ENCODE measurements at regions of chr6 and their contacts with region 1.

Region 1: DNA sequence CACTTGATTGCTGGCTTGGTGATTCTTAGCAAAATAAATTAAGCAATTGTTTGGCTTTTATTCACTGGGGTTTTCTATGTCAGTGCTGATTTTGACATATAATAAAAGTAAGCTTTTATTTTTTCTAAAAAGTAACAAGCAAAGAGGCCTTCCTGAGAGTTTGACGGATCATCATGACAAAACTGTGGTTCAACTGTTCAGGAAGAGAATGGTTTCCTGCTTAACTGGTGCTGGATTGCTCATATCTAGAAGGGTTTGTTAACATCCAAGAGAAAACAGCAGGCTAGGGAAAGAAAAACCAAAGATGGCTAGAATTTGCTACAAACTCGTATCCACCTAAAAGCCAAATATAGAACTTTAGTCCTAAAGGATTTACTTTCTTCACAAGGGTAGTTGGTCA is 21.2 kb downstream of the SERPINB1 start:
- DNase-seq: no peak
- ATAC-seq: no peak
- H3K4me3 Mint-ChIP-seq: no peak overlapping the region
- H3K27ac Mint-ChIP-seq: peak overlapping the region; percentile 53
- H3K4me1 Mint-ChIP-seq: peaks cover 40% of the 10 kb centered on the region
- H3K27me3 Mint-ChIP-seq: no peaks in the 10 kb centered on the region

Region 2: DNA sequence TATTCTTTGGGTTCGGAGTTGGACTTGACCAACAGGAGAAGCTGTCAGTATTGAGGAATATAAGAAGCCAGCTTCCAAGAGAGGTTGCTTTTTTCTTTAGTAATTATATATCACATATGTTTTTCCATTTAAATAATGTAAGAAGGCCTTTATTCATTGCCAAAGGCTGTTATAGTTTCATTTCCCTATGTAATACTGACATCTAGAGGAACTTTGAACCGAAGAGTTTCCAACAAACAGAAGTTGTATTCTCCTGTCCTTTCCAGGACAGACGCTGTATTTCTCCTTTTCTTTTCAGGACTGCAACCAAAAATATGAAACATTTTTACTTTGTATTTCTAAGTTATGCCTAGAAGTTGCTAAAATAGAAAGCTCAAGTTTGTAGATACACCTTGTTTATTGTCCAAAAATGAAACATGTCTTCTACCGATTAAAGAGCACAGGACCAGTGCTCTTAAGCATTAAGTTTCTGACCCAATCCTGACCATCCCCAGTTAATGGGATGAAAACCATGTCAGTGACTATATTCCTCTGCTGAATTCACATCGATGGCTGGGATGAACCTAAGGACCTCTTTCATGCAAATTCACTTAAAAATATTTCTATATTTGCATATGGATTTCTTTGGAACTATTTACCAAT is 124.8 kb before region 1 on chr6:
- CTCF ChIA-PET with region 1: no interaction called
- POLR2A ChIA-PET with region 1: no interaction called
- intact Hi-C with region 1: no loop called
- DNase-seq: no peak
- ATAC-seq: no peak
- H3K4me3 Mint-ChIP-seq: no peak overlapping the region
- H3K27ac Mint-ChIP-seq: no peak overlapping the region
- H3K4me1 Mint-ChIP-seq: no peaks in the 10 kb centered on the region
- H3K27me3 Mint-ChIP-seq: no peaks in the 10 kb centered on the region

Region 3: GRCh38 chr6:2799936-2800527 is 20.4 kb before region 1 on chr6:
- CTCF ChIA-PET with region 1: interaction called, 3 read pairs
- POLR2A ChIA-PET with region 1: interaction called, 3 read pairs
- intact Hi-C with region 1: loop called in 1 of 2 experiments (anchors 2 kb)
- DNase-seq: peak; percentile 33
- ATAC-seq: peak; percentile 80
- H3K4me3 Mint-ChIP-seq: no peak overlapping the region
- H3K27ac Mint-ChIP-seq: peak overlapping the region; percentile 11
- H3K4me1 Mint-ChIP-seq: peaks cover 20% of the 10 kb centered on the region
- H3K27me3 Mint-ChIP-seq: no peaks in the 10 kb centered on the region

Region 4: GRCh38 chr6:2841264-2842138 is 21.1 kb after region 1 on chr6 and contains the start of gene SERPINB1:
- CTCF ChIA-PET with region 1: interaction called, 5 read pairs
- POLR2A ChIA-PET with region 1: interaction called, 4 read pairs
- intact Hi-C with region 1: loop called in 1 of 2 experiments (anchors 2 kb)
- DNase-seq: peak; percentile 96
- ATAC-seq: peak; percentile 86
- H3K4me3 Mint-ChIP-seq: peak within 1 kb of the TSS; percentile 96
- H3K27ac Mint-ChIP-seq: peak within 1 kb of the TSS; percentile 91
- H3K4me1 Mint-ChIP-seq: peaks cover 67% of the 10 kb centered on the region
- H3K27me3 Mint-ChIP-seq: no peaks in the 10 kb centered on the region
- total RNA-seq, gene SERPINB1: 200 to 243 TPM

Region 5: DNA sequence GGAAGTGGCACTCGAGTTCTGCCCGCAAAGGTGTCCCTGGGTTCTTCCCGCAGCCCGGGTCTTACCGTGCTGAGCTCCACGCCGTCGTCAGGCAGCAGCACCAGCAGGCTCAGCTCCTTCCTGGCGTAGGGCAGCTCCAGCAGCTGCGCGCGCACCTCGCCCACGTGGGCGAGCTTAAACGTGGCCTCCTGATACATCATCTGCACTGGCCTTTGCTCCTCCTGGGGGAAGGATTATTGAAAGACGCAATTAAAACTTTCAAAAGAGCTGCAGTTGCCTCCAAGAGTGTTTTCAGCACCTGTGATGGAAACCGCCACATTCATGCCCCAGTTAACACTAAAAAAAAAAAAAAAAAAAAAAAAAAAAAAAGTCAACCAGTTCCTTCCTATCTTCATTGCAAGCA is 71.4 kb after region 1 on chr6:
- CTCF ChIA-PET with region 1: no interaction called
- POLR2A ChIA-PET with region 1: no interaction called
- intact Hi-C with region 1: no loop called
- DNase-seq: peak; percentile 88
- ATAC-seq: peak; percentile 91
- H3K4me3 Mint-ChIP-seq: peak overlapping the region; percentile 73
- H3K27ac Mint-ChIP-seq: peak overlapping the region; percentile 85
- H3K4me1 Mint-ChIP-seq: peaks cover 65% of the 10 kb centered on the region
- H3K27me3 Mint-ChIP-seq: no peaks in the 10 kb centered on the region

Measured in activated CD4-positive, alpha-beta T cell treated with anti-CD3 and anti-CD28 coated beads for 36 hours (primary cell).